ENCODE measurements at regions of chr7 and their contacts with region 1.

Region 1: DNA sequence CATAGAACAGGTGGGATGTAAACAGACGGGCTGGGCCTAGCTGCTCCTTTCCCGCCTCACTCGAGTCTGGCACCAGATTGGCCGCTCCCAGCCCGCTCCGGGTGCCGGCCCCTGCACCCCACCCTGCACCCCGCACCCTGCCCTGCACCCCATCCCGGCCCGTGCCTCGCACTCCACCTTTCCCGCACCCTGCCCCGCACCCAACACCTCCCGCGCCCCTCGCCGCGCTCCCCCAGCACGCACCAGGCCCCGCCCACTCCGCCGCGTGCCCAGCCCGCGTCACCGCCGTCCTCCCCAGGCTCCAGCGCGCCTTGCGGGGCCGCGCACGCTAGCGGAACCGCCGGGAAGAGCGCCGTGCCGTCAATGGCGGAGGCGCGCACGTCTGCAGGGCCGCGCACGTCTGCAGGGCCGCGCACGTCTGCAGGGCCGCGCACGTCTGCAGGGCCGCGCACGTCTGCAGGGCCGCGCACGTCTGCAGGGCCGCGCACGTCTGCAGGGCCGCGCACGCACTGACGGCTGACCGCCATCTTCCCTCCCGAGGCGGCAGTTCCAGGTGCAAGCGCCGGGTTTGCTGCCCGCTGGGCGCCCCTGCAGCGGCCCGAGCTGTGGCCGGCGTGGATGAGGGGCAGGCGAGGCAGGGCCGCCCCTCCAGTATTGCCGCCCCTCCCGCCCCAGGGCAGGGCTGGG is at the start of gene UBE3C:
- DNase-seq: peak; percentile 84 to 94 (median 91)
- H3K4me3 ChIP-seq: peak within 1 kb of the TSS; percentile 55 to 87 (median 71)
- H3K4me3 Mint-ChIP-seq: peak within 1 kb of the TSS; percentile 79 to 90
- H3K27ac ChIP-seq: peak within 1 kb of the TSS; percentile 58 to 90
- H3K27ac Mint-ChIP-seq: peak within 1 kb of the TSS; percentile 74 to 88 (median 84)
- H3K4me1 ChIP-seq: peaks cover 42 to 53% of the 10 kb centered on the region in 2 donors
- H3K4me1 Mint-ChIP-seq: peaks cover 41% of the 10 kb centered on the region
- H3K27me3 ChIP-seq: no peaks in the 10 kb centered on the region
- H3K27me3 Mint-ChIP-seq: peaks cover 0 to 2% (median 0%) of the 10 kb centered on the region in 3 donors
- CTCF ChIP-seq: no peak
- polyA plus RNA-seq, gene UBE3C: 19.5 to 34.5 (median 24.3) TPM

Region 2: GRCh38 chr7:156865493-156865892 is 273.1 kb before region 1 on chr7:
- intact Hi-C with region 1: no loop called
- DNase-seq: no peak
- H3K4me3 ChIP-seq: no peak overlapping the region
- H3K4me3 Mint-ChIP-seq: no peak overlapping the region
- H3K27ac ChIP-seq: no peak overlapping the region
- H3K27ac Mint-ChIP-seq: no peak overlapping the region
- H3K4me1 ChIP-seq: no peaks in the 10 kb centered on the region
- H3K4me1 Mint-ChIP-seq: peaks cover 11% of the 10 kb centered on the region
- H3K27me3 ChIP-seq: no peaks in the 10 kb centered on the region
- H3K27me3 Mint-ChIP-seq: peaks cover 0 to 2% (median 0%) of the 10 kb centered on the region in 3 donors
- CTCF ChIP-seq: no peak

Region 3: GRCh38 chr7:156892821-156893706 is 245.5 kb before region 1 on chr7 and contains the start of gene LMBR1:
- intact Hi-C with region 1: loop called in 1 of 2 experiments (anchors 10 kb)
- DNase-seq: peak; percentile 91 to 95 (median 94)
- H3K4me3 ChIP-seq: peak within 1 kb of the TSS; percentile 58 to 85 (median 78)
- H3K4me3 Mint-ChIP-seq: peak within 1 kb of the TSS; percentile 88 to 92
- H3K27ac ChIP-seq: peak within 1 kb of the TSS; percentile 85 to 92
- H3K27ac Mint-ChIP-seq: peak within 1 kb of the TSS; percentile 88 to 95 (median 93)
- H3K4me1 ChIP-seq: peaks cover 41 to 47% of the 10 kb centered on the region in 2 donors
- H3K4me1 Mint-ChIP-seq: peaks cover 49% of the 10 kb centered on the region
- H3K27me3 ChIP-seq: no peaks in the 10 kb centered on the region
- H3K27me3 Mint-ChIP-seq: peaks cover 0 to under 1% (median 0%) of the 10 kb centered on the region in 3 donors
- CTCF ChIP-seq: peak; percentile 80
- polyA plus RNA-seq, gene LMBR1: 14.8 to 24.4 (median 21.2) TPM

Region 4: DNA sequence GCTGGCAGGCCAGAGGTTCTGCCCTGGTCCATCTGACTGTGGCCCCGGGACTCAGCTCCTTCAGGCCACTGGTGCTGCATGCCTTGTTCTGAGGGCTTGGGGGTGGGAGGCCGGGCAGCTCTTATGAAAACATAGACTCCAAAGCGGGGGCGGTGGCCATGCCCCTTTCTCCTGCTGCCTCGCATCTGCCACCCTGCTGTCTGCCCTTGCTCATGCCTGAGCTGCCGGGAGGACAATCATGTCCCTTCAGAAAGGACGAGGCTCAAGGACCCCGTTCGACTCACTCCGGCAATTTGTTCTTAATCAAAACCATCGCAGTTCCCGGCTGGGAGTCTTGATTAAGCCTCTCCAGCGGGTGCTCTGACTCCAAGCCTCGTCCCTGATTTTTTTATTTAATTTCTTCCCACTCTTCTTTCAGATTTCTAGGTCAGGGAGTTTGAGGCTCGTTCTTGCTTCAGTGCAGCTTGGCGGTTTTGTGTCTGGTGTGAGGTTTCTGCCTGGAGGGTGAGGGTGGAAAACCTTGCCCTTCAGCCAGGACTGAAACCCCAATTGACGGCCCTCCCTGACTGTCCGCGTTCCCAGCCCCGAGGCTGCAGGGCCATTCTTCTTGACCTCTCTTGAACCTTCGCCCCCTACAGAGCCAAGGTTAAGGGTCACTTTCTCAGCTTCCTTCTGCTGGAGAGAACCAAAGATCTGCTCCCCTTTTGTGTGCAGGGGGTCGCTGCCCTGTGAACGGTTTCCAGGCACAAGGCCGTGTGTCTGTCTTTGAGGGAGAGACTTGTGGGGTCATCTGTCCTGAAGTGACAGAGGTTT is 319.1 kb after region 1 on chr7:
- intact Hi-C with region 1: no loop called
- DNase-seq: no peak
- H3K4me3 ChIP-seq: no peak overlapping the region
- H3K4me3 Mint-ChIP-seq: peak overlapping the region in 1 of 2 donors; percentile 11
- H3K27ac ChIP-seq: no peak overlapping the region
- H3K27ac Mint-ChIP-seq: no peak overlapping the region
- H3K4me1 ChIP-seq: no peaks in the 10 kb centered on the region
- H3K4me1 Mint-ChIP-seq: no peaks in the 10 kb centered on the region
- H3K27me3 ChIP-seq: no peaks in the 10 kb centered on the region
- H3K27me3 Mint-ChIP-seq: peaks cover 6 to 13% (median 11%) of the 10 kb centered on the region in 3 donors
- CTCF ChIP-seq: no peak

Region 5: DNA sequence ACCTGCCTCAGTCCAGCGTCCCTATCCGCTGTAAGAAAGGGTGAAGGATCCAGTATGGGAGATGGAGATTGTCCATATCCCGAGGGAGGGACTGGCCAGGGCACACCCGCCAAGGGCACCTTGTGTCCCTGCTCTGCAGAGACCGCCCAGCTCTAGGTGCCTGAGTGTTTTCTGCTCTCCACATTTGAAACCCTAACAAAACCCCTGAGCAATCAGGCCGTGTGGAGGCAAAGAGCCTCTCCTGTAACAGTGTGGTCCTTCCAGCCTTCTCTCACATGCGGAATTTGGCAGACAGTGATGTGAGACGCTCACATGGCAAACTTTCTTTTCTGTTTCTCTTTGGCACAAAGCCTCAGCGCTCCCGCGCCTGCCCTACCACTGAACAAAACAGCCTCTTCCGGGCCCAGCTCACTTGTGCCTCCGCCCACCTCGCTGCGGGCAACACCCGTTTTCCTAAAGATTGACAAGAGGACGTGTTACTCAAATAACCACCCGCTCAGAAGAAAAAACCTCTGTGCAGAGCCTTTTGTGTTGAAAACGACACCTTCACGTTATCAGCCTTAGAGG is 713.0 kb after region 1 on chr7:
- intact Hi-C with region 1: loop called in 1 of 2 experiments (anchors 10 kb)
- DNase-seq: peak; percentile 59 to 73 (median 73)
- H3K4me3 ChIP-seq: peak overlapping the region in 2 of 3 experiments; percentile 13 to 56
- H3K4me3 Mint-ChIP-seq: peak overlapping the region; percentile 70 to 80
- H3K27ac ChIP-seq: peak overlapping the region; percentile 82 to 84
- H3K27ac Mint-ChIP-seq: peak overlapping the region; percentile 94 to 98 (median 96)
- H3K4me1 ChIP-seq: peaks cover 58 to 62% of the 10 kb centered on the region in 2 donors
- H3K4me1 Mint-ChIP-seq: peaks cover 60% of the 10 kb centered on the region
- H3K27me3 ChIP-seq: no peaks in the 10 kb centered on the region
- H3K27me3 Mint-ChIP-seq: peaks cover 3% of the 10 kb centered on the region in 3 donors
- CTCF ChIP-seq: no peak

Measured in CD14-positive monocyte (primary cell).